AG04449 (cell line): ENCODE measurements at regions of chr16 and their contacts with region 1.

Region 1: DNA sequence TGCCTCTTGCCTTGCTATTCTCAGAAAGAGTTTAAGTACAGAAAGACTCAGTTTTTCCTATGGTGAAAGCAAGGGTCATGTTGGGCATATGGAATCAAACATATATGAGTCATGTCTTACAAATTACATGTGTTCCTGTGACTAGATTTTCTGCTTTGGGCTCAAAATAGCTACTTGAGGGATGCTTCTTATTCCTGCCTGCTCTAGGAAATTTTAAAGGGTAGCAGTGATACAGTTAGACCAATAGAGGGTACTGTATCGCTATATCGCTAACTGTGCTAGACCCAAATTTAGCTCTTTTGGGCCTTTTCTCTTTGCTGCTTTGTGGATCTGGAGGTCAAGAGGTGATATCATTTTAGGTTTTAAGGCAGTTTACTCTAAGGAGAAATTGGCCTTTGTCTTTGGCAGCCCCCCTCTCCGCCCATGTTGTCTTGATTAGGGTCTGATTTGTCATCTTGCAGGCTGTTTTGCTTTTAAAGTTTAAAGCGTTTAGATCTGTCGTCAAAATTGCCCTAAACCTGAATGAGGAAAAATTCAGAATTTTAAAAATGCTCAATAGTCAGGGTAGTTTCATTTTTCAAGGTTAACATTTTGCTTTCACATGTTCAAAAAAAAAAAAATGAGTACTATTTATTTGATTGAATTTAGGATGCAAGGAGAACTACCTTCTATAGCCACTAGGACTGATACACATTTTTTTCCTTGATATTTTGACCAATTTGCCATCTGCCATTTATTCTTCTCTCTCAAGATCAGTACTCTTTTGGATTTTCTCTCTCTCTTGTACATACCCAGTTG is 8.8 kb downstream of the NFATC3 start:
- DNase-seq: no peak
- H3K4me3 ChIP-seq: no peak overlapping the region
- CTCF ChIP-seq: peak; percentile 46

Region 2: DNA sequence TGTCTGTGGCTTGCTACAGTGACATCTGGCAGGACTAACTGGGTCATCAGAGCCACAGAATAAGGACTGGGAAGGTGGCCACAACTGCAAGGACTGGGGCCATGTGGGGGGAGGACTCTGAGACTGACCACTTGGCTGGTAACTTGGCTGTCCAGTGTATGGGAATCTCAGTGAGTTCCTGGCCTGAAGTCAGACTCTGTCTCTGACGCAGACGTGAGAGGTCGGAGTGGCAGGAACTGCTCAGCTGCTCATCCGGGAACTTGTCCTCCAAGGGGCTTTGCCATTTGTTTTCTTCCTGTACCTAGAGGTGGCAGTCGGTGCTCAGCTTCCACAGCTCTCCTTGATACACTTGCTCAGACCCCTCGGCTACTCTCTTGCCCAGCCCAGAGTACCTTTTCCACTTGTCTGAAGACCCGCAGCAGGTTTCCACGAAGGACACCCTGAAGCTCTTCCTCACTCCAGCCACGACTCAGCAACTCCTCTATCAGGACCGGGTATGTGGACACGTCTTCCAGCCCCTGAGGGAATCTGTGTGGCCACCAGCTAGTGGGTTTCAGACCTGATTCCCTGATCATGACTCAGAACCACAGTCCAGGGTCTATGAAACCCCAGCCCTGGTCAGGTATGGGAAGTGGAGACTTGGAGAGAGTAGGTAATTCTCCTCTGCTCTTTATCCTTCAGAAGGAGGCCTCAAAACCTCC is 106.4 kb before region 1 on chr16:
- CTCF ChIA-PET with region 1: no interaction called
- POLR2A ChIA-PET with region 1: no interaction called
- DNase-seq: no peak
- H3K4me3 ChIP-seq: no peak overlapping the region
- CTCF ChIP-seq: no peak

Region 3: GRCh38 chr16:68105611-68106010 is 11.6 kb after region 1 on chr16:
- CTCF ChIA-PET with region 1: interaction called, 41 read pairs
- POLR2A ChIA-PET with region 1: interaction called, 3 read pairs
- DNase-seq: no peak
- H3K4me3 ChIP-seq: no peak overlapping the region
- CTCF ChIP-seq: no peak

Region 4: DNA sequence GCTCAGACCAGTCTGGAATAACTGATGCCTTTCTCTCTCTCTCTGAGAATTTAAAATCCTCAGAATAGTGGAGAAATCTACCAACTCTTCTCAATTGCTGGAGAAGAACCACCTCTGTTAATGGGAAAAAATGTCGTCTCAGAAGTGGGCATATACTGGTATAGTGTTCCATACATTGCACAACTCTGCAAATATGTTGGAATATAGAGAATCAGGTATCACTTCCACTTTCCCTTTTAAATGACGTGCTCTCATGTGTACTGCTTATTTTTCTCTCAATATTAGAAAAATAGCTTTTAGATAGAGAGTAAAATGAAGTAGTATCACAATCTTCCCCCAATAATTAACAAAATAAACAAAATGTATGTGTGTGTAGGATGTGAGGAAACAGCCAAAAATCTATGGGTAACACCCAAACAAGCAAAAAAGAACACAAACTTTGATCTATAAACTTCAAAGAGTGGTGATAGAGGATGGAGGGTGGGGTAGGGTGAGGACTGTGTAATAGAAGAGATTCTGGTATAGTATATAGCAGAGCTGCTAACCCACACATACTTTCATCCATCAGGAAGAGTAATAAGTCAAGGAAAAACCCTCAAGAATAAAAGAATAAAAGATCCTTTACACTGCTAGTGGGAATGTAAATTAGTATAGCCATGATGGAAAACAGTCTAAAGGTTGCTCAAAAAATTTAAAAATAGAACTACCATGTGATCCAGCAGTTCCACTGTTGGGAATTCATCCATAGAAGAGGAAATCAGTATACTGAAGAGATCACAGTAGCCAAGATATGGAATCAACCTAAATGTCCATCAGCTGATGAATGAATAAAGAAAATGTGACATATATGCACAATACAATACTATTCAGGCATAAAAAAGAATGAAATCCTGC is 38.0 kb after region 1 on chr16:
- CTCF ChIA-PET with region 1: interaction called, 11 read pairs
- POLR2A ChIA-PET with region 1: no interaction called
- DNase-seq: no peak
- H3K4me3 ChIP-seq: no peak overlapping the region
- CTCF ChIP-seq: no peak

Region 5: GRCh38 chr16:68179196-68179795 is 85.3 kb after region 1 on chr16:
- CTCF ChIA-PET with region 1: interaction called, 12 read pairs
- POLR2A ChIA-PET with region 1: no interaction called
- DNase-seq: no peak
- H3K4me3 ChIP-seq: no peak overlapping the region
- CTCF ChIP-seq: no peak